ENCODE measurements at regions of chr1 and their contacts with region 1.

Region 1: DNA sequence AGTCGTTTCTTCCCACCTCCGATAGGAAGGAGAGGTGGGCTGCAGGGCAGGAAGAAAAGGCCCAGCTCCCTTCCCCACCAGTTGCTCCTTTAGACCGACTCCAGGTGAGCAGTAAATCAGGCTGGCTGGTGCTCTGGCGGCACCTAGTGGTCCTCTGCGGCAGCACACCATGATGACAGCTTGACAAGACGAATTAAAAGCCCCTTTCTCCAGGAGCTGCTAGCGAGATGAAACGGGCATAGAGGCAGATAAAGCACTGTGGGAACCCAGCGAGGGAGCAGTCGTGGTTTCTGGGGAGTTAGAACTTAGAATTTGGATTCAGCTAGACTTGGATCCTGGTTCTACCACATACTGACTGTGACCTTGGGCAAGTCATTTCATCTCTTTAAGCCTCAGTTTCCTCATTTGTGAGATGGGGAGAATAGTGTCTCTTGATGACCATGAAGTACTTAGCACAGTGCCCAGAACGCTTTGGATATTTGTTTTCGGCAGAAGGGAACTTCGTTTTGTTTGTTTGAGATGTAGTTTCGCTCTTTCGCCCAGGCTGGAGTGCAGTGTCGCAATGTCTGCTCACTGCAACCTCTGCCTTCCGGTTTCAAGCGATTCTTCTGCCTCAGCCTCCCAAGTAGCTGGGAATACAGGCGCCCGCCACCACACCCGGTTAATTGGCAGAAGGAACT is 21.8 kb upstream of the COL9A2 start:
- DNase-seq: peak; percentile 80 to 95 (median 89)
- ATAC-seq: peak; percentile 98
- H3K4me3 ChIP-seq: no peak overlapping the region
- H3K4me3 Mint-ChIP-seq: peak overlapping the region; percentile 42
- H3K27ac ChIP-seq: no peak overlapping the region
- H3K27ac Mint-ChIP-seq: peak overlapping the region; percentile 10
- H3K4me1 ChIP-seq: peaks cover 25% of the 10 kb centered on the region
- H3K4me1 Mint-ChIP-seq: peaks cover 41% of the 10 kb centered on the region
- H3K27me3 ChIP-seq: no peaks in the 10 kb centered on the region
- H3K27me3 Mint-ChIP-seq: no peaks in the 10 kb centered on the region
- CTCF ChIP-seq: peak; percentile 94

Region 2: DNA sequence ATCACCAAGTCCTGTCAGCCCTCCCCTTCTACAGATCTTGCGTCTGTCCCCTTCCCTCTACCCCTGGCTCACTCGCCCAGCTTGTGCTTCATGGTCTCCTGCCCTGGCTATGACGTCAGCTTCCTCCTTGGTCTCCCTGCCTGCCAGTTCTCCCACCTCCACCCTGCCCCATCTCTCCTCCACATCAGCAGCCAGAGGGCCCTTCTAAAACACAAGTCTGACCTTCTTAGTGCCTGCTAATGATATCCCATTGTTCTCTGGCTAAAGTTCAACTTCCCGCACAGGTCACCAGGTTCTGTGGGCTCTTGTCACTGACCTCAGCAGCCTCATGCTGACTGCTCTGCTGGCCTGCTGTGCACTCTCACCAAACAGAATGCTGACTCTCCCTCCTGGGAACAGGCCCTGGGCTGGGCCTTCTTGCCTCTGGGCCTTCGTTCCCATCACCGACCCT is 412.5 kb before region 1 on chr1:
- CTCF ChIA-PET with region 1: no interaction called
- POLR2A ChIA-PET with region 1: no interaction called
- intact Hi-C with region 1: no loop called
- DNase-seq: no peak
- ATAC-seq: no peak
- H3K4me3 ChIP-seq: no peak overlapping the region
- H3K4me3 Mint-ChIP-seq: no peak overlapping the region
- H3K27ac ChIP-seq: no peak overlapping the region
- H3K27ac Mint-ChIP-seq: no peak overlapping the region
- H3K4me1 ChIP-seq: no peaks in the 10 kb centered on the region
- H3K4me1 Mint-ChIP-seq: peaks cover 3% of the 10 kb centered on the region
- H3K27me3 ChIP-seq: no peaks in the 10 kb centered on the region
- H3K27me3 Mint-ChIP-seq: no peaks in the 10 kb centered on the region
- CTCF ChIP-seq: no peak

Region 3: DNA sequence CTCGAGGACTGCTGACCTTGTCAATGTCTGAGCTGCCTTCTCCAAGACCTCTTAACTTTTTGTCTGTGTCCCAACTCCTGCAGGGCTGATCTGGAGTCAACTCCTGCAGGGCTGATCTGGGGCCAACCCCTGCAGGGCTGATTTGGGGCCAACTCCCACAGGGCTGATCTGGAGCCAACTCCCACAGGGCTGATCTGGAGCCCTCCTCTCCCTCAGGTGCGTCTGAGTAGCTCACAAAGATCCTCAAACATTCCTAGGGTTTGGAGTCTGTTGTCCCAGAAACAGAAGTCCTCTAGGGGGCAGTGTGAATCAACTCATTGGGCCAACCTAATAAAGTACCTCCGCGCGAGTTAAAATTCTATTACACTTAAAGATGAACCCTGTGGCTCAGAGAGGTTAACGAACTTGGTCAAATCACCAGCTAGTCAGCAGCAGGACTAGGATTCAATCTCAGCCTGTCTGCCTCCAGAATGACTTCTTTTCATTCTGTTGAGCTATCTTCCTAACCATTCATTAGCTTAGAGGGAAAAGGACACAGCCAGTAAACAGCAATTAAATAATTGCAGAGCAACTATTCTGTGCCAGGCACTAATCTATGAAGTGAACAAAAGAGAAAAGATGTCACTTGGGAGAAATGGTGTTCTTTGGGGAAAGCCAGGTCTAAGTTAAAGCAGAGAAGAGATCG is 194.9 kb before region 1 on chr1:
- CTCF ChIA-PET with region 1: interaction called, 312 read pairs
- POLR2A ChIA-PET with region 1: interaction called, 3 read pairs
- intact Hi-C with region 1: loop called (anchors 1 kb)
- DNase-seq: peak; percentile 10 to 82 (median 51)
- ATAC-seq: peak; percentile 74
- H3K4me3 ChIP-seq: no peak overlapping the region
- H3K4me3 Mint-ChIP-seq: no peak overlapping the region
- H3K27ac ChIP-seq: no peak overlapping the region
- H3K27ac Mint-ChIP-seq: no peak overlapping the region
- H3K4me1 ChIP-seq: peaks cover 3% of the 10 kb centered on the region
- H3K4me1 Mint-ChIP-seq: peaks cover 6% of the 10 kb centered on the region
- H3K27me3 ChIP-seq: no peaks in the 10 kb centered on the region
- H3K27me3 Mint-ChIP-seq: peaks cover 20% of the 10 kb centered on the region
- CTCF ChIP-seq: peak; percentile 73

Region 4: GRCh38 chr1:40281853-40282252 is 57.0 kb before region 1 on chr1:
- CTCF ChIA-PET with region 1: interaction called, 9 read pairs
- POLR2A ChIA-PET with region 1: interaction called, 3 read pairs
- intact Hi-C with region 1: loop called in 1 of 2 experiments (anchors 5 kb)
- DNase-seq: no peak
- ATAC-seq: no peak
- H3K4me3 ChIP-seq: no peak overlapping the region
- H3K4me3 Mint-ChIP-seq: no peak overlapping the region
- H3K27ac ChIP-seq: no peak overlapping the region
- H3K27ac Mint-ChIP-seq: no peak overlapping the region
- H3K4me1 ChIP-seq: no peaks in the 10 kb centered on the region
- H3K4me1 Mint-ChIP-seq: no peaks in the 10 kb centered on the region
- H3K27me3 ChIP-seq: no peaks in the 10 kb centered on the region
- H3K27me3 Mint-ChIP-seq: no peaks in the 10 kb centered on the region
- CTCF ChIP-seq: no peak

Region 5: GRCh38 chr1:40363721-40364120 is 24.8 kb after region 1 on chr1:
- CTCF ChIA-PET with region 1: interaction called, 19 read pairs
- POLR2A ChIA-PET with region 1: interaction called, 4 read pairs
- intact Hi-C with region 1: no loop called
- DNase-seq: peak in 2 of 9 experiments; percentile 30 to 50
- ATAC-seq: peak; percentile 66
- H3K4me3 ChIP-seq: no peak overlapping the region
- H3K4me3 Mint-ChIP-seq: no peak overlapping the region
- H3K27ac ChIP-seq: no peak overlapping the region
- H3K27ac Mint-ChIP-seq: no peak overlapping the region
- H3K4me1 ChIP-seq: no peaks in the 10 kb centered on the region
- H3K4me1 Mint-ChIP-seq: peaks cover 9% of the 10 kb centered on the region
- H3K27me3 ChIP-seq: no peaks in the 10 kb centered on the region
- H3K27me3 Mint-ChIP-seq: no peaks in the 10 kb centered on the region
- CTCF ChIP-seq: no peak

Region 6: DNA sequence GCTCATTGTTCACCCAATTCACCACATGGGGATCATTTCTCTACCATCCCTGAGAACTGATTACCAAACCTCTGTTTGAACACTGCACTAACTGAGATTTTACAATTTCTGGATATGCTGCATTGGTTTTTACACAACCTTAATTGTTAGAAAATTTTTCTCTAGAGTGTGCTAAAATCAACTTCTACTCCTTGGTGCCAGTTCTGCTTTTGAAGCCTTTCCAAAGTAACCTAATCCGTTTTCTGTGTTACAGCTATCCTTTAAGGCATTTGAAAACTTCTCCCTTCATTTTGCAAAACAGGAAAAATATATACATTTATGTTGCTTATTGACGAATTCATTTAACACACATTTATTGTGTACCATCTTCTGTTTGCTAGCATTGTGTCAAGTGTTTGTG is 58.4 kb after region 1 on chr1:
- CTCF ChIA-PET with region 1: interaction called, 158 read pairs
- POLR2A ChIA-PET with region 1: interaction called, 3 read pairs
- intact Hi-C with region 1: no loop called
- DNase-seq: no peak
- ATAC-seq: no peak
- H3K4me3 ChIP-seq: peak overlapping the region in 1 of 2 experiments; percentile 18
- H3K4me3 Mint-ChIP-seq: peak overlapping the region; percentile 47
- H3K27ac ChIP-seq: peak overlapping the region in 1 of 2 experiments; percentile 83
- H3K27ac Mint-ChIP-seq: peak overlapping the region; percentile 93
- H3K4me1 ChIP-seq: peaks cover 93% of the 10 kb centered on the region
- H3K4me1 Mint-ChIP-seq: peaks cover 92% of the 10 kb centered on the region
- H3K27me3 ChIP-seq: no peaks in the 10 kb centered on the region
- H3K27me3 Mint-ChIP-seq: no peaks in the 10 kb centered on the region
- CTCF ChIP-seq: no peak

Region 7: DNA sequence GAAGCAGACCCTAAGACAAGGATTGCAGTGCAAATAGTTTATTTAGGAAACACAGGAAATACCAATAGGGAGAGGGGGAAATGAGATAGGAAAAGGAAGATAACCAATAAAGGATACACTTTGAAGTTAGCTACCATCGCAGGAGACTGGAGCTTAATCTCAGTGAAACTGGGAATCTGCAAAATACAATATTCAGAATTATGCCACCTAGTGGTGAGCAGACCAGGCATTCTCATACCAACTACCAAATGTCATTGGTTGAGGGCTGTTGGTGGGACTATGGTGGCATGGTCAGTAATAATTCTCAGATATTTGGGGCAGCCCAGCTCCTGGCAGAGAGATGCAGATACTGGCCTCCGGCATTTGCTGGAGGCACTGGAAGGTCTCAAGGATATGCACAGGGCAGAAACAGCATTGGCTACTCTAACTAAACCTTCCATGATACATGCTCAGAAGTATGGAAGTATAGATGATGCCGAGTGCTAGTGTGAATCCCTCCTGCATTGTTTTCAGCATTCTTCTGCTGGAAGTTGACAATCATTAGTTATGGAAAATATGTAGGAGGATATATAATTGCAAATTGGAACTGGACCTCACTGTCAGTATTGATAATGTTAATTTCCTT is 99.6 kb after region 1 on chr1:
- CTCF ChIA-PET with region 1: interaction called, 32 read pairs
- POLR2A ChIA-PET with region 1: no interaction called
- intact Hi-C with region 1: no loop called
- DNase-seq: peak in 4 of 9 experiments; percentile 17 to 63 (median 40)
- ATAC-seq: peak; percentile 40
- H3K4me3 ChIP-seq: no peak overlapping the region
- H3K4me3 Mint-ChIP-seq: no peak overlapping the region
- H3K27ac ChIP-seq: no peak overlapping the region
- H3K27ac Mint-ChIP-seq: no peak overlapping the region
- H3K4me1 ChIP-seq: no peaks in the 10 kb centered on the region
- H3K4me1 Mint-ChIP-seq: peaks cover 2% of the 10 kb centered on the region
- H3K27me3 ChIP-seq: no peaks in the 10 kb centered on the region
- H3K27me3 Mint-ChIP-seq: no peaks in the 10 kb centered on the region
- CTCF ChIP-seq: peak; percentile 70

Region 8: GRCh38 chr1:40901886-40902852 is 563.3 kb after region 1 on chr1:
- CTCF ChIA-PET with region 1: no interaction called
- POLR2A ChIA-PET with region 1: no interaction called
- intact Hi-C with region 1: no loop called
- DNase-seq: no peak
- ATAC-seq: no peak
- H3K4me3 ChIP-seq: no peak overlapping the region
- H3K4me3 Mint-ChIP-seq: no peak overlapping the region
- H3K27ac ChIP-seq: no peak overlapping the region
- H3K27ac Mint-ChIP-seq: no peak overlapping the region
- H3K4me1 ChIP-seq: no peaks in the 10 kb centered on the region
- H3K4me1 Mint-ChIP-seq: no peaks in the 10 kb centered on the region
- H3K27me3 ChIP-seq: no peaks in the 10 kb centered on the region
- H3K27me3 Mint-ChIP-seq: peaks cover 2% of the 10 kb centered on the region
- CTCF ChIP-seq: no peak

Region 9: DNA sequence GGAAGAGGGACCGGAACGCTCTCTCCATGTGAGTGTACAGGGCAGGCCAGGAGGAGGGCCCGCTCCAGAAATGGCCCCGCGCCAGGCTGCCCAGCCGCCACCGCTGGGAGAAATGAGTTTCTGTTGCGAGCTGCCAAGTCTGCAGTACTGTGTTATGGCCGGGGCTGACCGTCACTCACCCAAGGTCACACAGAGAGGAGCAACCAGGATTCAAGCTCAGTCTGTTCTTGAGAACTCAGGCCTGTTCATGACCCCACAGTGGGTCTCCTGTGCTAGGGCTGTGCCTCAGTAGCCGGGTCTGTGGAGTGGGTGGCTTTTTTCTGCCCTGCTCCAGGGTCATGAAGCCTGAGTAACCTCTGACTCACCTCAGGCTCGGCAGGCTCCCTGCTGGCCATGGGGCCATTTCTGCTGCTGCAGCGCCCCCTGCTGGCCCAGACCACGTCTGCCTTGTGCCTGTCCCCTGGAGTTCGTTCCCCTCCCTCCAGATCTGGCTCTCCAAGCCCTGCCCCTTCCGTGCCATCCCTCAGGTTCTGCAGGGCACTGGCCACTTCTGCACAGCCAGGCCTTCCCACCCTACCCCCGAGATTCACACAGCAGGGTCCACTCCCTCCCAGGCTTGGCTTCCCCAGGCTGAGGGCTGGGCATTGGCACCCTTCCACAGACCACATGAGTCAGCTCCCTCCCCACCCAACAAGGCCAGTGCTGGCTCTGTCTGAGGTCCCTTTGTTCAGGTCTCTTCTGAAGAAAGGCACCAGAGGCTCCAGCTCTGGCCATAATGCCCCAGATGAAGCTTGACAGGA is 1093.8 kb after region 1 on chr1:
- CTCF ChIA-PET with region 1: no interaction called
- POLR2A ChIA-PET with region 1: no interaction called
- intact Hi-C with region 1: no loop called
- DNase-seq: peak; percentile 45 to 76 (median 64)
- ATAC-seq: peak; percentile 40
- H3K4me3 ChIP-seq: no peak overlapping the region
- H3K4me3 Mint-ChIP-seq: no peak overlapping the region
- H3K27ac ChIP-seq: no peak overlapping the region
- H3K27ac Mint-ChIP-seq: no peak overlapping the region
- H3K4me1 ChIP-seq: no peaks in the 10 kb centered on the region
- H3K4me1 Mint-ChIP-seq: no peaks in the 10 kb centered on the region
- H3K27me3 ChIP-seq: no peaks in the 10 kb centered on the region
- H3K27me3 Mint-ChIP-seq: peaks cover 31% of the 10 kb centered on the region
- CTCF ChIP-seq: peak; percentile 53